Activated T-helper 1 cell treated with anti-CD3 and anti-CD28 coated beads, Interleukin-12 subunit alpha, Interleukin-12 subunit beta, Interleukin-2, Interleukin-4 antibody, amounts not matched to agents 30 ng/mL and 10 ng/mL and 1 ng/mL, durations not matched to agents 14 hours and 24 hours and 36 hours (primary cell): ENCODE measurements at regions of chr14 and their contacts with region 1.

Region 1: DNA sequence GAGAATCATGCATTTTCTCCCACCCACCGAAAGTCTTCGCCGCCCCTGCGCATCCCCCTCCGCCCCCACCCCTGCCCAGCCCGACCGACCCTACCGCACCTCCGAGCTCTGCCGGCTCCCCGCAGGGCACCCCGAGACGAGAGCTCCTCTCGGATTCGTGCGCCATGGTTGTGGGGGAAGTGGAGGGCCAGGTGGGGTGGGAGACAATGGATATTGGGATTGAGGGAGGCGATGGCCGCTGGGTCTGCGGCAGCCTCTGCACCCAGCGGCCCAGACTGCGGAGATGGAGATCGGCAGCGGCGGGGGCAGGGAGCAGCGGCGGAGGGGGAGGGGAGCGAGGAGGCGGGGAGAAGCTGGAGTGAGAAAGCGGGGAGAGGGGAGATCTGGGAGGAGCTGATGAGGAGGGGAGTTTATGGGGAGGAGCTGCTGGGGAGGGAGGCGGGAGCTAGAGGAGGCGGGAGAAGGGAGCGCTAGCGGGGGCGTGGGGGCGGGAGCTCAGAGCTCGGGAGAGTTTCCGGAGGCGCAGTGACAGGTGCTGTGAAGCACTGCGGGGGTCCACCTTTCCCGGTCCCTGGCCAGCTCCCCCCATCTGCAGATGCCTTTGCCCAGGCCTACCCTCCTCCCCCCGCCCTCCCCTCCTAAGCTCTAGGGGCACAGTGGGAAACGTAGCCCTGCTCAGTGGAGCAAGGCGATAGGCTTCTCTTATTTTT is at the start of gene SALL2:
- DNase-seq: peak; percentile 35
- H3K4me3 Mint-ChIP-seq: peak within 1 kb of the TSS; percentile 81
- H3K27ac Mint-ChIP-seq: peak within 1 kb of the TSS; percentile 68
- H3K4me1 Mint-ChIP-seq: peaks cover 5% of the 10 kb centered on the region
- H3K27me3 Mint-ChIP-seq: peaks cover 7% of the 10 kb centered on the region
- total RNA-seq, gene SALL2: 1.3 and 1.6 TPM in 2 replicates

Region 2: GRCh38 chr14:20922474-20922873 is 603.6 kb before region 1 on chr14:
- intact Hi-C with region 1: no loop called
- DNase-seq: no peak
- H3K4me3 Mint-ChIP-seq: no peak overlapping the region
- H3K27ac Mint-ChIP-seq: no peak overlapping the region
- H3K4me1 Mint-ChIP-seq: no peaks in the 10 kb centered on the region
- H3K27me3 Mint-ChIP-seq: no peaks in the 10 kb centered on the region

Region 3: GRCh38 chr14:21233457-21234076 is 292.6 kb before region 1 on chr14:
- intact Hi-C with region 1: no loop called
- DNase-seq: no peak
- H3K4me3 Mint-ChIP-seq: peak overlapping the region; percentile 37
- H3K27ac Mint-ChIP-seq: peak overlapping the region; percentile 40
- H3K4me1 Mint-ChIP-seq: peaks cover 82% of the 10 kb centered on the region
- H3K27me3 Mint-ChIP-seq: no peaks in the 10 kb centered on the region

Region 4: GRCh38 chr14:21476925-21477681 is 49.0 kb before region 1 on chr14 and contains the starts of genes RAB2B and TOX4:
- intact Hi-C with region 1: loop called (anchors 1 kb)
- DNase-seq: peak; percentile 96
- H3K4me3 Mint-ChIP-seq: peak within 1 kb of the TSS; percentile 100
- H3K27ac Mint-ChIP-seq: peak within 1 kb of the TSS; percentile 99
- H3K4me1 Mint-ChIP-seq: peaks cover 35% of the 10 kb centered on the region
- H3K27me3 Mint-ChIP-seq: peaks cover 2% of the 10 kb centered on the region
- total RNA-seq, gene RAB2B: 30.3 and 32.5 TPM in 2 replicates
- total RNA-seq, gene TOX4: 77.5 and 86.6 TPM in 2 replicates

Region 5: GRCh38 chr14:21494902-21495762 is 31.0 kb before region 1 on chr14:
- intact Hi-C with region 1: no loop called
- DNase-seq: no peak
- H3K4me3 Mint-ChIP-seq: no peak overlapping the region
- H3K27ac Mint-ChIP-seq: peak overlapping the region; percentile 66
- H3K4me1 Mint-ChIP-seq: peaks cover 19% of the 10 kb centered on the region
- H3K27me3 Mint-ChIP-seq: no peaks in the 10 kb centered on the region

Region 6: DNA sequence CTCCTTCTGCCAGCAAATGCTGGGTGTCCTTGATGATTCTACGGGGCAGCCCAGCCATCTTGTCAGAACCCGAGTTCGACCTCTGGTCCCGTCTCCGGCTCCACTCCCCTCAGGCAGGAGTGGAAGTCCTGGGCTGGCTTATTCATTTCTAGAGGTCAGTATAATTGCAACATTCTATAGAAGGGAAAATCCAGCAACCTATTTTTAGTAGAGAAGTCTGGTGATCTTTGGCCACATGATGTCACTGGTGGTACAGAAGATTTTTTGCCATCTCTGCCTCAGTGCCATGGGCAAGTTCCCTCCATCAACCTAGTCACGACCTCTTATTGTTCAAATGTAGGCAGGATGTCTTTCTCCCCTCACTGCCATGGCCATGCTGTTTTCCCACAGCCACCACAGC is 86.2 kb after region 1 on chr14:
- intact Hi-C with region 1: no loop called
- DNase-seq: no peak
- H3K4me3 Mint-ChIP-seq: no peak overlapping the region
- H3K27ac Mint-ChIP-seq: no peak overlapping the region
- H3K4me1 Mint-ChIP-seq: no peaks in the 10 kb centered on the region
- H3K27me3 Mint-ChIP-seq: peaks cover 21% of the 10 kb centered on the region